ENCODE measurements at regions of chr17 and their contacts with region 1.

Region 1: GRCh38 chr17:38667099-38667786 is 7.5 kb downstream of the EPOP start:
- DNase-seq: peak; percentile 82
- ATAC-seq: peak; percentile 12; the same call in 1 of the 2 replicates
- H3K4me3 Mint-ChIP-seq: no peak overlapping the region
- H3K27ac Mint-ChIP-seq: no peak overlapping the region
- H3K4me1 Mint-ChIP-seq: peaks cover 52% of the 10 kb centered on the region
- H3K27me3 Mint-ChIP-seq: peaks cover 60% of the 10 kb centered on the region
- CTCF ChIP-seq: peak; percentile 96

Region 2: DNA sequence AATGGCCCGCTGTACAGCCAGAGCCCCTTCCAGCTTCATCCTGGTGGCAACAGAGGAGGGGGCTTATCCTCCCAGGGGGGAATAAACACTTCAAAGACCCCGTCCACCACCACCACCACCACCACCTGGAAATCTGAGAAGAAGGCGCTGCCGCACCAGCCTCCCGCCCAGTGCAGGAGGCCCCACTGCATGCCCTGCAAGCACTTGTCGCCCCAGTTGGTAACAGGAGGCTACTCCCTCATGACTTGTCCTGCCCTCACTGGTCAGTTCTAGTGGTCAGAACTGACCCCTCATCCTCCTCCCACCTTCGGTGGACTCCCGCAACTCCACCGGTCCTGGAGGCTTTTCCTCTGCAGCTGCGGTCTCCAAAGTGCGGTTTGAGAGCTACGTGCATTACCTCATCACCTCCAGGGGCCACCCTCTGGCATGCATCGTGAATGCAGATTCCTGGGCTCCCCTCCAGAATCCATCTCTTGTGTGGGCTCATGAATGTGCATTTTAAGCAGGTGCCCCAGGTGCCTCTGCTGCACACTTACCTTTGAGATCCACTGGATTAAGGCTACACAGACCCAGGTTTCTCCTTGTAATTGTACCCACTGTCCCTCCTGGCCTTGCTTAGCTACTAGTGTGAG is 133.3 kb before region 1 on chr17:
- CTCF ChIA-PET with region 1: interaction called, 31 read pairs
- POLR2A ChIA-PET with region 1: no interaction called
- DNase-seq: no peak
- ATAC-seq: peak; percentile 27
- H3K4me3 Mint-ChIP-seq: no peak overlapping the region
- H3K27ac Mint-ChIP-seq: no peak overlapping the region
- H3K4me1 Mint-ChIP-seq: peaks cover 33% of the 10 kb centered on the region
- H3K27me3 Mint-ChIP-seq: peaks cover 53% of the 10 kb centered on the region
- CTCF ChIP-seq: no peak

Region 3: DNA sequence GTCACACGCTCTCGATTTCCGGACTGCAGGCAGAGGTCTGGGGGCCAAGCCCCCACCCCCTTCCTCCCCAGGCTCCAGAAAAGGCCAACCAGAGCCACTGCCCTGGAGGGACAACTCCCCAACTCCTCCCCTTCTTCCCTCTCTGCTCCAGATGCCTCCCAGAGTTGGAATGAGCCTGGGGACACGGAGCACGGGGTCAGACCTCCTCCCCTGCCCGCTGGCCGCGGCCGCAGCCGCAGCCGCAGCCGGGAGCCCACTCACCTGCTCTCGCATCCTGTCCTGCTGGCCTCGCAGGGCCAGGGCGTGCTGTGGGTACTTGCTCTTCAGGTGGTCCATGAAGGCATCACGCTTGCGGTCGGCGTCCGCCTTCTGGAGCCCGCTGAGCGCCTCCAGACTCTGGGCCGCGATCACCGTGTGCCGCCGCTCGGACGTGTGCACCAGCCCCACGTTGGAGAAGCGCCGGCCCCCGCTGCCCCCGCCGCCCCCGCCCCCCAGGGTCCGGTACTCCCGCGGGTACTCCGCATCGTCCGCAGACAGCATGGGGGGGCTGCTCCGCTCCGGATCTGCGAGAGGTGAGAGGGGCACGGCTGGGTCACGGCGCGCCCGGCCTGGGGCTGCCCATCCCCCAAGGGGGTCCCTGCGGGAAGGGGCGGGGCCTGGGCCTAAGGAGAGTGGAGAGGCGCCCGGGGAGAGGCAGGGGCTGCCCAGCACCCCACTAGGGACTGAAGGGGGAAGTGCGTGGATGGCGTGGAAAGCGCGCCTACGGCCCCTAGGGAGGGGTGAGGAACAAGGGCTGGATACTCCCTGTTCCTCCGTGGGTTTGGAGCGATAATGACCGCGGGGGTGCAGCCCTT is 88.8 kb before region 1 on chr17:
- CTCF ChIA-PET with region 1: interaction called, 33 read pairs
- POLR2A ChIA-PET with region 1: no interaction called
- DNase-seq: peak; percentile 64
- ATAC-seq: peak; percentile 79
- H3K4me3 Mint-ChIP-seq: peak overlapping the region; percentile 58
- H3K27ac Mint-ChIP-seq: no peak overlapping the region
- H3K4me1 Mint-ChIP-seq: peaks cover 54% of the 10 kb centered on the region
- H3K27me3 Mint-ChIP-seq: peaks cover 90% of the 10 kb centered on the region
- CTCF ChIP-seq: no peak

Region 4: GRCh38 chr17:38617011-38617867 is 50.0 kb before region 1 on chr17:
- CTCF ChIA-PET with region 1: interaction called, 19 read pairs
- POLR2A ChIA-PET with region 1: interaction called, 3 read pairs
- DNase-seq: peak; percentile 19
- ATAC-seq: peak; percentile 64
- H3K4me3 Mint-ChIP-seq: no peak overlapping the region
- H3K27ac Mint-ChIP-seq: no peak overlapping the region
- H3K4me1 Mint-ChIP-seq: peaks cover 51% of the 10 kb centered on the region
- H3K27me3 Mint-ChIP-seq: peaks cover 10% of the 10 kb centered on the region
- CTCF ChIP-seq: no peak

Region 5: DNA sequence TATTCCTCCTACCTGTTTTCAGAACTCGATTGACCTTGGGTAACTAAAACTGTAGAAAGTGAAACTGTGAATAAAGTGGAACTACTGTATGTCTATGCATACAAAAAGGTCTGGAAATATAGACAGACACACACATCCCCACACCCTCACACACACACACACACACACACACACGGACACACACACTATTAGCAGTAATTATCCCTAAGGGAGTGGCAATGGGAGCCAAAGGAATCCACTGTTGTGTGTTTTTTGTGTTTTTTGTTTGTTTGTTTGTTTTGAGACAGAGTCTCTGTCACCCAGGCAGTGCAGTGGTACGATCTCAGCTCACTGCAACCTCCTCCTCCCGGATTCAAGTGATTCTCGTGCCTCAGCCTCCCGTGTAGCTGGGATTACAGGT is 34.9 kb before region 1 on chr17:
- CTCF ChIA-PET with region 1: no interaction called
- POLR2A ChIA-PET with region 1: no interaction called
- DNase-seq: no peak
- ATAC-seq: no peak
- H3K4me3 Mint-ChIP-seq: no peak overlapping the region
- H3K27ac Mint-ChIP-seq: no peak overlapping the region
- H3K4me1 Mint-ChIP-seq: peaks cover 16% of the 10 kb centered on the region
- H3K27me3 Mint-ChIP-seq: peaks cover 4% of the 10 kb centered on the region; the same call in 1 of the 2 replicates
- CTCF ChIP-seq: no peak

Region 6: DNA sequence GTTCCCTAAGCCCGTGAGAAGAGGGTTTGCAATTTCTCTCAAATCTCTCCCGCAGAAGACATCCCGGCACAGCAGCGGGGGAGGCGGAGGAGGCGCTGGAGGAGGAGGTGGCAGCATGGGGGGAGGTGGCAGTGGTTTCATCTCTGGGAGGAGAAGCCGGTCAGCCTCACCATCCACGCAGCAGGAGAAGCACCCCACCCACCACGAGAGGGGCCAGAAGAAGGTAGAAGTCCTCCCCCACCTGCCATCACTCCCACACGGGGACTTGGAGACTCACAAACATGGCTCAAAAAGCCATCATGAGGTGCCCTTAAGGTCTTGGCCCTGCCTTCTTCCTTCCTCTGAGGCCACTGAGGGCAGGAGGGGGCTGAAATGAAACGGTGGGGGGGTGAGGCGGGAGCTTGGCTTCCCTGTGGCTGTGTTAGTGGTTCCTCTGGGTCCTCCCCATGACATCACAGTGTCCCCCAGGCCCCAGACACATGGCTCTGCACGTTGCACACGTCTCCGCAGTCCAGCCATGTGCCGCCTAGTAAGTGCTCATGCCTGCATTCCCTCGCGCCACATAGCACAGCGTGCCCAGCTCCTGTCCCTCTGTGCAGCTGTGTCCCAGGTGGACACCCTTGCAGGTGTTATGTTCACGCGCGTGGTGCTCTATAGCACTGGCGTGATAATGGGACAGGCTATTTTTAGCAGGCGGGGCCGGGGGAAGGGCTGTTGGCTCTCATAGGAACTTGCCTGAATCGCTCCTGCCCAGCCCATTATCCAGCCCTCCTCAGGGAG is 44.7 kb after region 1 on chr17:
- CTCF ChIA-PET with region 1: interaction called, 12 read pairs
- POLR2A ChIA-PET with region 1: no interaction called
- DNase-seq: no peak
- ATAC-seq: no peak
- H3K4me3 Mint-ChIP-seq: no peak overlapping the region
- H3K27ac Mint-ChIP-seq: no peak overlapping the region
- H3K4me1 Mint-ChIP-seq: peaks cover 58% of the 10 kb centered on the region
- H3K27me3 Mint-ChIP-seq: peaks cover 30% of the 10 kb centered on the region
- CTCF ChIP-seq: no peak

Region 7: DNA sequence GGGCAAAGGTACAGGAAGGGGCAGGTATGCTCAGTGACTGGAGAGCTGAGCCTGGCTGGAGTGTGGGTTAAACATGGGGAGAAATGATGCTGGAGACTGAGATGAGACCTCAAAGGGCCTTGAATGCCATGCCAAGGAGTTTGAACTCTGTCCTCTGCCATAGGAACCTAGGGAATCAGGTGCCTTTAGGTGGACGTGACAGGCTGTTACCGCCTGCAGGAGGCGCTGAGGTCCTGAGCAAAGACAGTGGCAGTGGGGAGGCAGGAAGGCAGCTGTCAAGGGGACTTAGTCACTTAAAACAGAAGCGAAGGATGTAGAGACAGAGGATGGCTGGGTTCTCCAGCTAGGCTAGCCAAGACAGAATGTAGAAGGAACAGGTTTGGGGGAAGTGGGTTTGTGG is 94.4 kb after region 1 on chr17:
- CTCF ChIA-PET with region 1: no interaction called
- POLR2A ChIA-PET with region 1: no interaction called
- DNase-seq: peak; percentile 73
- ATAC-seq: peak; percentile 93
- H3K4me3 Mint-ChIP-seq: no peak overlapping the region
- H3K27ac Mint-ChIP-seq: no peak overlapping the region
- H3K4me1 Mint-ChIP-seq: no peaks in the 10 kb centered on the region
- H3K27me3 Mint-ChIP-seq: no peaks in the 10 kb centered on the region
- CTCF ChIP-seq: peak; percentile 44